GM12878 (cell line): ENCODE measurements at regions of chr3 and their contacts with region 1.

Region 1: GRCh38 chr3:149291178-149291577 is 42.3 kb downstream of the TM4SF18 start:
- DNase-seq: no peak
- ATAC-seq: peak; percentile 81
- H3K4me3 ChIP-seq: no peak overlapping the region
- H3K27ac ChIP-seq: no peak overlapping the region
- H3K4me1 ChIP-seq: no peaks in the 10 kb centered on the region
- H3K27me3 ChIP-seq: no peaks in the 10 kb centered on the region
- CTCF ChIP-seq: peak; percentile 25 to 71 (median 60)
- EP300 ChIP-seq: no peak
- POLR2A ChIP-seq: no peak
- RAD21 ChIP-seq: peak; percentile 42

Region 2: DNA sequence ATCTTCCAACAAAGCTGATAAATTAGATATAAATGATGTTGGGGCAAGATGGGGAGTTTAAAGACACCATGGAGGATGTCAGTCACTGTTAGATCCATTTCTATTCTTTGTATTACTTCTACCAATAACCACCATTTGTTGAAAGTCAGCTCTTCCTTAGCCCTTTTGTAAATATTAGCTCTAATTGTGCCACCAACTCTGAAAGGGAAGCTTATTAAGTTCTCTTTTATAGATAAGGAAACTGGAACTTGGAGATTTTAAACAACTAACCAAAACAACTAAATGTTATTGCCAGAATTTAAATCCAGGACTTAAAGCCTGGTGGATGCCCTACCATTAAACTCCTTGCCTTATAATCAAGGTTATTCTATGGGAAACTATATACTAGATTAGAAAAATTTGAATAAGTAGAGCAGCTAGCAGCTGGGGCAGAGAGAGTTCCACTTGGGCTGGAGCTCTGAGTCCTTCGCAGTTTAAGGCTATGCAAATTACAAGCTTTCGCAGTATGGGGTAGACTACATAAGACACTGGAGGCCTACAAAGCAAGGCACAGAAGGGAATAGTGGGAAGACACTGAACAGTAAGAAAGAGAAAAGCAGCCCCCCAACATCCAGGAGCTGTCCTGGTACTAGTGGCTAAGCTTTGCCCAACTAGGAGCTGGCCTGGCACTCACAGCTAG is 10.4 kb before region 1 on chr3:
- CTCF ChIA-PET with region 1: interaction called, 13 read pairs
- POLR2A ChIA-PET with region 1: no interaction called
- RAD21 ChIA-PET with region 1: no interaction called
- SMC1A ChIA-PET with region 1: interaction called, 4 read pairs
- in situ Hi-C with region 1: no loop called
- intact Hi-C with region 1: no loop called
- DNase-seq: no peak
- ATAC-seq: no peak
- H3K4me3 ChIP-seq: no peak overlapping the region
- H3K27ac ChIP-seq: no peak overlapping the region
- H3K4me1 ChIP-seq: peaks cover 4% of the 10 kb centered on the region; the same call in 1 of the 2 replicates
- H3K27me3 ChIP-seq: no peaks in the 10 kb centered on the region
- CTCF ChIP-seq: no peak
- EP300 ChIP-seq: no peak
- POLR2A ChIP-seq: no peak
- RAD21 ChIP-seq: no peak

Region 3: GRCh38 chr3:149512209-149512782 is 221.1 kb after region 1 on chr3:
- CTCF ChIA-PET with region 1: no interaction called
- POLR2A ChIA-PET with region 1: no interaction called
- RAD21 ChIA-PET with region 1: no interaction called
- SMC1A ChIA-PET with region 1: no interaction called
- in situ Hi-C with region 1: no loop called
- intact Hi-C with region 1: no loop called
- DNase-seq: no peak
- ATAC-seq: peak; percentile 92
- H3K4me3 ChIP-seq: no peak overlapping the region
- H3K27ac ChIP-seq: no peak overlapping the region
- H3K4me1 ChIP-seq: no peaks in the 10 kb centered on the region; the same call in 1 of the 2 replicates
- H3K27me3 ChIP-seq: no peaks in the 10 kb centered on the region
- CTCF ChIP-seq: peak; percentile 81 to 85 (median 84); a peak in 5 of 6 replicates
- EP300 ChIP-seq: no peak
- POLR2A ChIP-seq: no peak
- RAD21 ChIP-seq: peak; percentile 93